Heart right ventricle (tissue), 16 donors: ENCODE measurements at regions of chr7 and their contacts with region 1.

Region 1: GRCh38 chr7:141276031-141276430 is 202.2 kb downstream of the TMEM178B start:
- DNase-seq: peak in 1 of 2 donors; percentile 19
- ATAC-seq: peak in 6 of 8 donors; percentile 56 to 82 (median 76)
- H3K4me3 ChIP-seq: no peak overlapping the region
- H3K27ac ChIP-seq: peak overlapping the region in 3 of 10 donors; percentile 16 to 22 (median 21)
- H3K4me1 ChIP-seq: peaks cover 0 to 11% (median 4%) of the 10 kb centered on the region in 9 donors
- H3K27me3 ChIP-seq: no peaks in the 10 kb centered on the region
- CTCF ChIP-seq: no peak

Region 2: GRCh38 chr7:141220263-141220880 is 55.7 kb before region 1 on chr7:
- intact Hi-C with region 1: no loop called
- DNase-seq: no peak
- ATAC-seq: no peak
- H3K4me3 ChIP-seq: no peak overlapping the region
- H3K27ac ChIP-seq: no peak overlapping the region
- H3K4me1 ChIP-seq: peaks cover 0 to 8% (median 0%) of the 10 kb centered on the region in 9 donors
- H3K27me3 ChIP-seq: no peaks in the 10 kb centered on the region
- CTCF ChIP-seq: peak in 5 of 9 donors; percentile 20 to 43 (median 23)

Region 3: GRCh38 chr7:141362580-141363435 is 86.8 kb after region 1 on chr7:
- intact Hi-C with region 1: loop called in 1 of 10 experiments (anchors 5 kb)
- DNase-seq: peak in 1 of 2 donors; percentile 38
- ATAC-seq: peak in 6 of 8 donors; percentile 36 to 84 (median 58)
- H3K4me3 ChIP-seq: no peak overlapping the region
- H3K27ac ChIP-seq: peak overlapping the region in 9 of 10 donors; percentile 30 to 89 (median 68)
- H3K4me1 ChIP-seq: peaks cover 2 to 68% (median 37%) of the 10 kb centered on the region in 9 donors
- H3K27me3 ChIP-seq: no peaks in the 10 kb centered on the region
- CTCF ChIP-seq: no peak

Region 4: DNA sequence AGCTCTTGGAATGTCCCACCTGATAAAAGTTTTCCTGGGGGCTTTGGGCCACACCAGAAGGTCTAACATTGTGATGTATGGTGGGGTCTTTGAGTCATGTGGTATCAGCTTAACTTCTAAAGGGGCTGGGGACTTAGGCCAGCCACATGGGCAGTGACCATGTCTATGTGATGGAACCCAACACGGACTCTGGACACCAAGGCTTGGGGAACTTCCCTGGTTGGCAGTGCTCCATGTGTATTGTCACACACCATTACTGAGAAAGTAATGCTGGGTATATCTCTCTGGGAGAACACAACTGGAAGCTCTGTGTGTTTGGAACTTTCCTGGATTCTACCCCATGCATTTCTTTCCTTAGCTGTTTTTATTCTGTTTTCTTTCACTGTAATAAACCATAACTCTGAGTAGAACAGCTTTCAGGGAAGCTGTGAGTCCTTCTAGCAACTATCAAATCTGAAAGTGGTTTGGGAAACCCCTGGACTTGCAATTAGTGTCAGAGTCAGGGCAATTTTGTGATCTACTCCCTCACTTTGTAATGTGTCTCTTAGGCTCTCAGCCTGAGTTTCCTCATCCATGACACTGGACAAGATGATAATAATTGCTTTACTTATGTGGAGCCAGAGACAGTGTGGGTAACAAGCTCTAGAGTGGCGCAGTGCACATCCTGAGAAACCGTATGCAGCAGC is 246.8 kb after region 1 on chr7:
- intact Hi-C with region 1: loop called in 1 of 10 experiments (anchors 10 kb)
- DNase-seq: no peak
- ATAC-seq: no peak
- H3K4me3 ChIP-seq: no peak overlapping the region
- H3K27ac ChIP-seq: no peak overlapping the region
- H3K4me1 ChIP-seq: no peaks in the 10 kb centered on the region
- H3K27me3 ChIP-seq: no peaks in the 10 kb centered on the region
- CTCF ChIP-seq: no peak

Region 5: GRCh38 chr7:141533149-141533949 is 257.3 kb after region 1 on chr7:
- intact Hi-C with region 1: loop called in 4 of 10 experiments (anchors 5 to 10 kb)
- DNase-seq: peak; percentile 52 to 58
- ATAC-seq: peak; percentile 60 to 94 (median 83)
- H3K4me3 ChIP-seq: no peak overlapping the region
- H3K27ac ChIP-seq: peak overlapping the region in 4 of 10 donors; percentile 1 to 42 (median 21)
- H3K4me1 ChIP-seq: peaks cover 0 to 20% (median 0%) of the 10 kb centered on the region in 9 donors
- H3K27me3 ChIP-seq: peaks cover 0 to 11% (median 0%) of the 10 kb centered on the region in 7 donors
- CTCF ChIP-seq: peak; percentile 91 to 99 (median 95)